ENCODE measurements at regions of chr9 and their contacts with region 1.

Region 1: GRCh38 chr9:82606492-82607382 is 456.2 kb downstream of the RASEF start:
- DNase-seq: peak in 1 of 2 donors; percentile 16
- ATAC-seq: peak; percentile 78 to 90
- H3K4me3 ChIP-seq: no peak overlapping the region
- H3K27ac ChIP-seq: no peak overlapping the region
- H3K4me1 ChIP-seq: peaks cover 0 to 11% of the 10 kb centered on the region in 2 donors
- H3K27me3 ChIP-seq: no peaks in the 10 kb centered on the region
- CTCF ChIP-seq: peak; percentile 22 to 72 (median 63)
- POLR2A ChIP-seq: no peak

Region 2: DNA sequence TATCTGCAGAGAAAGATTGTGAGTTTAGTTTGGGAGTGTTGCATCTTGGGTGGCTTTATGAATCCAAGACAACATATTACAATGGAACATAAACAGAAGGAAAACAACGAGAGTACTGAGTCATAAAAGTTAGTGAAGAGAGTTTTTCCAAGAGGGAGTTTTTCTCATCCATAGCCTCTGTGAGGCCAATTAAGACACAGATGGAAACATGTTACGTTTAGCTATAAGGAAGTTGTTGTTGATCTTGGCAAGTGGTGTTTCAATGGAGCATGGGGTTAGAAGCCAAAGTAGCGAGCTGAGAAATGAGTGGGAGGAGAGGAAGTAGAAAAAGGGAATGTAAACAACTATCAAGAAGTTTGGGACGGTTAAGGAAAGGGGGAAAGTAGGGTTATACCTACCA is 731.8 kb before region 1 on chr9:
- in situ Hi-C with region 1: loop called in 1 of 4 experiments (anchors 25 kb)
- intact Hi-C with region 1: no loop called
- DNase-seq: no peak
- ATAC-seq: no peak
- H3K4me3 ChIP-seq: no peak overlapping the region
- H3K27ac ChIP-seq: no peak overlapping the region
- H3K4me1 ChIP-seq: no peaks in the 10 kb centered on the region
- H3K27me3 ChIP-seq: no peaks in the 10 kb centered on the region
- CTCF ChIP-seq: no peak
- POLR2A ChIP-seq: no peak

Measured in gastrocnemius medialis (tissue), 4 donors.